Activated T-helper 2 cell treated with anti-CD3 and anti-CD28 coated beads, Interferon-gamma antibody, Interleukin-2, Interleukin-4, amounts not matched to agents 10 μg/mL and 5 μg/mL and 100 μg/mL, durations not matched to agents 14 hours and 24 hours and 36 hours (primary cell): ENCODE measurements at regions of chr21 and their contacts with region 1.

Region 1: GRCh38 chr21:42117229-42117966 is 46.3 kb downstream of the UMODL1 start:
- DNase-seq: peak; percentile 60
- H3K4me3 Mint-ChIP-seq: no peak overlapping the region
- H3K27ac Mint-ChIP-seq: peak overlapping the region; percentile 24
- H3K4me1 Mint-ChIP-seq: peaks cover 29% of the 10 kb centered on the region
- H3K27me3 Mint-ChIP-seq: peaks cover 43% of the 10 kb centered on the region

Region 2: GRCh38 chr21:41612674-41613532 is 504.5 kb before region 1 on chr21:
- intact Hi-C with region 1: loop called (anchors 2 kb)
- DNase-seq: no peak
- H3K4me3 Mint-ChIP-seq: no peak overlapping the region
- H3K27ac Mint-ChIP-seq: no peak overlapping the region
- H3K4me1 Mint-ChIP-seq: no peaks in the 10 kb centered on the region
- H3K27me3 Mint-ChIP-seq: peaks cover 8% of the 10 kb centered on the region

Region 3: DNA sequence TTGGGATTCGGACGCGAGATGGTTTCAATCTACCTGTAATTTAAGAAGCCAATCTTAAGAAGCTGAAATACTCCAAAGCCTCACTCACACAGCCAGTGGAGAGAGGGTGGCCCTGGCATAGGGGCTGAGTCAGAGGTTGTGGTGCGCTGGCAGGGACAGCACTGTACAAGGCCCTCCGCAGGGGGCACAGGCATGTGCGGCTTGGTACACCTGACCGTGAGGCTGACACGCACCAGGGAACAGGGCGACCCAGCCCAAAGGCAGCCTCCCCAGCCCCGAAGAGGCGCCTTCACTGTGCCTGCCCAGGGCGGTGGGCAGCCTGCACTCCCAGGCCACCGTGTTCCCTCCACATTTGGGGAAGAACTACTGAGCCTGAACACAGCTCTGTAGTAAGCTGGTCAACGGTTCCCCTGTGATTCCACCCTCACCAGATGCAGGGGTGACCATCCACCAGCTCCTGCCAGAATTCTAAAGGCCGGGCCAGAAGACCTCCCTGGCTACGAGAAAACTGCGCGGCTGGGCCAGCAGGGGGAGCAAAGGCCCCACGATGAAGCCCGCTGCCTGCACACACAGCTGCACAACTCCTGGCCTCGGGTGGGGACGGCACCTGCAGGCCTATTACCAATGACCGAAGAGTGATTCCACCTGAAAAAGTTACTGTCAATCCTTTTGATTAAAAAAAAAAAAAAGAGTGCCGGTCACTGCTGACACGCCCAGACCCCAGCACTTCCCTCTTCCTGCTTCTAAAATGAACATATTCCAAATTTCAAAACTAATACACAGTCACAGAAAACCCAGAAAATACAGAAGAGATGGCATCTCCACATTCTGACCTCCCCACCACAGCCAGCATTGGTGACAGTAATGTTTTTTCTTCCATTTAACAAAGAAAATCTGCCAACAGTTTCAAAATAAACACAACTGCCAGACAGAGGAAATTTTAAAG is 300.9 kb before region 1 on chr21:
- intact Hi-C with region 1: loop called (anchors 1 kb)
- DNase-seq: peak; percentile 37
- H3K4me3 Mint-ChIP-seq: no peak overlapping the region
- H3K27ac Mint-ChIP-seq: no peak overlapping the region
- H3K4me1 Mint-ChIP-seq: no peaks in the 10 kb centered on the region
- H3K27me3 Mint-ChIP-seq: no peaks in the 10 kb centered on the region